Adrenal gland (tissue), 19 donors: ENCODE measurements at regions of chr22 and their contacts with region 1.

Region 1: GRCh38 chr22:32499666-32500065 is 25.1 kb downstream of the FBXO7 start:
- DNase-seq: no peak
- H3K4me3 ChIP-seq: no peak overlapping the region
- H3K27ac ChIP-seq: no peak overlapping the region
- H3K4me1 ChIP-seq: peaks cover 0 to 7% of the 10 kb centered on the region in 2 donors
- H3K27me3 ChIP-seq: no peaks in the 10 kb centered on the region
- CTCF ChIP-seq: no peak
- POLR2A ChIP-seq: no peak

Region 2: DNA sequence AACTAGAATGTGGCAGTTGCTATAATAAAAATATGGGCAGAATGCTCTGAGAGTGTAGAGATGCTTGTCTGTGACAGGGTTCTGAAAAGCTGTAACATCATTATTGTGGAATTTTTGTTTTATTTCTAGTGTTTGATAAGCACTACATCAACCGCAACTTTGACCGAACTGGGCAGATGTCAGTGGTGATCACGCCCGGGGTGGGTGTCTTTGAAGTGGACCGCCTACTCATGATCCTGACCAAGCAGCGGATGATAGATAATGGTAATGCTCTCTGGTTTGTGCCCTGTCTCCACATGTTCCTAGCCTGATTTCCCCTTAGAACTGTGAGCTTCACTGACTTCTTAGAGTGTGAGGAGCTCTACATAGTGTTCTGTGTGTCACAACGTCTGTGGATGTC is 697.1 kb before region 1 on chr22:
- intact Hi-C with region 1: loop called in 1 of 2 experiments (anchors 10 kb)
- DNase-seq: no peak
- H3K4me3 ChIP-seq: no peak overlapping the region
- H3K27ac ChIP-seq: no peak overlapping the region
- H3K4me1 ChIP-seq: no peaks in the 10 kb centered on the region
- H3K27me3 ChIP-seq: no peaks in the 10 kb centered on the region
- CTCF ChIP-seq: no peak
- POLR2A ChIP-seq: no peak